Astrocyte of the cerebellum (primary cell): ENCODE measurements at regions of chr3 and their contacts with region 1.

Region 1: DNA sequence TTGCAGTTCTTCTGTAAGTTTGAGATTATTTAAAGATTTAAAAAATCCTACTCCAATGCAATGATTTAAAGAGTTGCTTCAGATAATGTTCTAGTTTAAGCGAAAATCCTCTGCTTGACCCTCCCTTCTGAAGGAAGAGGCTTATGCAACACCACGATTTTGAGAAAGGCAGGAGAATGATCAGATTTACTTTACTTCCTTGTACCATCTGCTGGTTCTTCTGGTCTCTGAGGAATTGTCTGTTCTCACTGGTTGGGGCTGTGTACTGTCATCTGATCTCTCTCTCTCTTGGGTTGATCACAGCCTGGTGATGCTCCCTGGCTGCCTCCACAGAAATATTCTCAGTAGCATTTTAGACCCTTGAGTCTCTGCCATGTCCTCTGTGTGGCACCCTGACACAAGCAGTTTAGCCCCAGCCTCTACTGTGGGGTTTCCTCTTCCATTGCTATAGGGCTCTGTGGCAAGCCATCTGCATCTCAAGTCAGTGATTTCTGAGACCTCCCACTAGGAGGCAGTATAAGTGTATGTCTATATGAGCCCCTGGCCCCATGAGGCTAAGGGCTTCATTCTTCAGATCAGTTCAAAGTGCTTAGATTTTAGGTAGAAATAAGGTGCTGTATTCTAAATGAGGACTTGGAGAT is 50.8 kb upstream of the PLAAT1 start:
- DNase-seq: no peak
- H3K4me3 ChIP-seq: no peak overlapping the region
- CTCF ChIP-seq: peak; percentile 46

Region 2: GRCh38 chr3:193086688-193087087 is 103.6 kb before region 1 on chr3:
- in situ Hi-C with region 1: no loop called
- DNase-seq: no peak
- H3K4me3 ChIP-seq: no peak overlapping the region
- CTCF ChIP-seq: no peak

Region 3: GRCh38 chr3:193129601-193130000 is 60.7 kb before region 1 on chr3:
- in situ Hi-C with region 1: no loop called
- DNase-seq: no peak
- H3K4me3 ChIP-seq: no peak overlapping the region
- CTCF ChIP-seq: no peak

Region 4: DNA sequence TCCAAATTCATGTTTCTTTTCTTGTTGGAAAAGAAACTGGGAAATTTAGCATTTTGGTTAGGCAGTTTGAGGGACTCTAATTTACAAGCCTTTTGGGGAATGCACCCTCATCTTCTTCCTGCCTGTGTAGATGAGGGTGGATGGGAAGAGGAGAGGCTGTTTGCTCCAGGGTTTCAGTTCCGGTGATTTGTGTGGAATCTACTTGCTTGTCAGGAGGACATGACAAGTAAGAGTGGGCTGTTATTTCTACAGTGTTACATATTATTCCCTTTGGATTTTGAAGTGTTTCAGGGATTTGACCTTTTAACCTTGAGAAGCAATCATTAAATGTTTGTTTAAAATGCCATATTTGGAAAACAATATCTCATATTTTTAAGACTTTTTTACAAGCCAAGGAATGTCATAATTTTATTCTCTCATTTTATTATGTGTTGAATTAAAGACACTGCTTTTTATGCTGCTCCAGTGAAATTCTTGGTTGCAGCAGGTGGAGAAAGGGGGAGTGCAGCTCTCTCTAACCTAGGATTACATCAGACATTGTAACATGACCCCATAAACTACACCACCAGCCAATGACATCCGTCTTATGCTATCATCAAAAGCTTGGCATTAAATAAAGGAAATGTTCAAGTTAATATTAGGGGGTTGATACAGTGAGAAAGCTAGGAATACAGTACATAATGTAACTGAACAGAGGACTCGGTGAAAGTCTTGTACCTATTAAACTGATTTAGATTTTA is 81.0 kb after region 1 on chr3:
- in situ Hi-C with region 1: loop called (anchors 5 kb)
- DNase-seq: no peak
- H3K4me3 ChIP-seq: no peak overlapping the region
- CTCF ChIP-seq: no peak